Heart left ventricle (tissue), 16 donors: ENCODE measurements at regions of chr7 and their contacts with region 1.

Region 1: GRCh38 chr7:101743241-101743994 is 74.0 kb upstream of the CUX1 start:
- DNase-seq: peak; percentile 31 to 72 (median 48)
- ATAC-seq: peak; percentile 33 to 85 (median 64)
- H3K4me3 ChIP-seq: peak overlapping the region; percentile 29 to 68 (median 51)
- H3K27ac ChIP-seq: no peak overlapping the region
- H3K4me1 ChIP-seq: peaks cover 0 to 34% (median 3%) of the 10 kb centered on the region in 12 donors
- H3K27me3 ChIP-seq: peaks cover 0 to 19% (median 4%) of the 10 kb centered on the region in 9 donors
- CTCF ChIP-seq: peak; percentile 36 to 77 (median 64)
- POLR2A ChIP-seq: no peak

Region 2: GRCh38 chr7:101538596-101539459 is 204.6 kb before region 1 on chr7:
- intact Hi-C with region 1: no loop called
- DNase-seq: peak in 4 of 5 donors; percentile 36 to 80 (median 48)
- ATAC-seq: peak; percentile 34 to 68 (median 64)
- H3K4me3 ChIP-seq: no peak overlapping the region
- H3K27ac ChIP-seq: no peak overlapping the region
- H3K4me1 ChIP-seq: peaks cover 0 to 19% (median 0%) of the 10 kb centered on the region in 12 donors
- H3K27me3 ChIP-seq: peaks cover 0 to 5% (median 0%) of the 10 kb centered on the region in 9 donors
- CTCF ChIP-seq: peak; percentile 70 to 95 (median 86)
- POLR2A ChIP-seq: no peak

Region 3: DNA sequence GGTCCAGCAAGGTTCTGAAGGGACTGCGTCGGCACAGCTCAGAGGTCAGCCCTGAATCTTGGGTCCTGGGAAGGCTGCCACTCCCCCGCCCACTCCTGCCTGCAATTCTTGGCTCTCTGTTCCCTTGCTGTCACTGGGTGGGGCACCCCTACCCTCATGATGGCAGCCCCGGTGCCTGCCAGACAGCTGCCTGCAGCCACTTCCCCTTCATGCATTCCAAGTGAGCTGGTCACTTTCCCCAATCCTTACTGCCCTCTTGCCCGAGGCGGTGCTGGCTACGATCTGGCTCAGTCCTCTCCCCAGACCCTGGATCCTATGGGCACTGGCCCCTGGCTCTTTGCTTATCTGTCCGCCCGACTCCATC is 128.5 kb before region 1 on chr7:
- intact Hi-C with region 1: no loop called
- DNase-seq: peak in 1 of 5 donors; percentile 42
- ATAC-seq: peak in 2 of 4 donors; percentile 16 to 38
- H3K4me3 ChIP-seq: no peak overlapping the region
- H3K27ac ChIP-seq: no peak overlapping the region
- H3K4me1 ChIP-seq: peaks cover 0 to 6% (median 0%) of the 10 kb centered on the region in 12 donors
- H3K27me3 ChIP-seq: peaks cover 0 to 9% (median 0%) of the 10 kb centered on the region in 9 donors
- CTCF ChIP-seq: no peak
- POLR2A ChIP-seq: no peak

Region 4: DNA sequence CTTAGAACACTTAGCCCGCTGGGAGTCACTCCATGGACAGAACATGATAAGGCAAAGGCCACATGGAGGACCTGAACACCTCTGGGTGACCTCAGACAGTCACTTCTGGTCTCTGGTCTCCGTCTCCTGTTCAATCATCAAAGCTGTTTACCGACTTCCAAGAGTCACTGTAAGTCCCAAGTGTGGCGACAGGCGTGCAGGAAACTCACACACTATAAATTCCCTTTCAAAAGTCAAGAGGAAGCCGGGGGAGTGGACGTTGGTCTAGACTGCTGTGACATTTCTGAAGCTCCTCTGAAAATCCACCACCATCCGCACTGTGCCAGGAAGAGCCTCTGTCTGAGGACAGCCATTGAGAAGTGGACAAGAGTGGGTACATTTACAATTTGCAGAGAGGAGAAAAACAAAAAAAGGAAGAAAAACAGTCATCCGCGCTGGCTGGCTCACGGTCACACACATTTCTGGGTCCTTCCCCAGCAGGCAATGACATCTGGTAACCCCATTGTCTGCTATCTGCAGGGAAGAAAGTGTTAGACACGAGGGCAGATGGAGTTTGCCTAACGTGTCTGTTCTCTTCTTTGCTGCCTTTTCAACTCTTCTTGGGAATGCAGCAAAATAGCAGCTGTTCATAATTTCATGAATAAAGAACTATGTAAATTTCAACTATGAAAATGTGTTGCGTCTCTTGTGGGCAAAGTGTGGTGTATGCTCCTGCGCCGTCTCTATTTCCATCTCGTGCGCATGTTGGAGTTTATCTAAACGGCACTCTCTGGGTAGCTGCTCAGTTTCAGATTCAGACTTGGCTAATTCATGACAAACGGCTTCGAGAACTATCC is 41.1 kb after region 1 on chr7:
- intact Hi-C with region 1: no loop called
- DNase-seq: peak in 1 of 5 donors; percentile 27
- ATAC-seq: peak in 3 of 4 donors; percentile 52 to 71 (median 58)
- H3K4me3 ChIP-seq: peak overlapping the region in 6 of 12 donors; percentile 3 to 28 (median 18)
- H3K27ac ChIP-seq: peak overlapping the region in 2 of 12 donors; percentile 2 to 13
- H3K4me1 ChIP-seq: peaks cover 0 to 18% (median 14%) of the 10 kb centered on the region in 12 donors
- H3K27me3 ChIP-seq: no peaks in the 10 kb centered on the region
- CTCF ChIP-seq: no peak
- POLR2A ChIP-seq: no peak

Region 5: DNA sequence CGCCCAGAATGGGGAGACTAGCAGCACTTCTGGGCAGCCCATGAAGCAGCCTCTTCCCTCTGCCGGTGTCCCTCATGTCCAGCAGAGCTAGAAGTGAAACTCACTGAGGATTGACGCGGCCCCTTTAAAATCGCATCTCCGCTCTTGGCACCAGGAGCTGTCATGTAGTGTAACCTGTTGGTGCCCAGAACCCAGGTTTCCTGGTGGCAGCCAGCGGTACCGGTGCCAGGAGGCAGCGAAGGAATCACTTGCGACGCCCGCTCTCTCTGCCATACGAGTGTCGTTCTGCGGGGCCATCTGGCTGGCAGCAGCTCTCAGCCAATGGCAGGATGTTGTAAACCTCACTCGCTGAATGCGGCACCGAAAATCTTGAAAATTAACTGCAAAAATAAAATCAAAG is 156.7 kb after region 1 on chr7:
- intact Hi-C with region 1: no loop called
- DNase-seq: peak; percentile 69 to 89 (median 77)
- ATAC-seq: peak; percentile 69 to 86 (median 83)
- H3K4me3 ChIP-seq: peak overlapping the region in 8 of 12 donors; percentile 2 to 38 (median 30)
- H3K27ac ChIP-seq: peak overlapping the region in 10 of 12 donors; percentile 7 to 79 (median 60)
- H3K4me1 ChIP-seq: peaks cover 0 to 75% (median 40%) of the 10 kb centered on the region in 12 donors
- H3K27me3 ChIP-seq: no peaks in the 10 kb centered on the region
- CTCF ChIP-seq: peak in 3 of 12 donors; percentile 11 to 16 (median 14)
- POLR2A ChIP-seq: no peak

Region 6: GRCh38 chr7:102236592-102237287 is 493.3 kb after region 1 on chr7:
- intact Hi-C with region 1: loop called in 2 of 10 experiments (anchors 5 kb)
- DNase-seq: peak in 4 of 5 donors; percentile 45 to 64 (median 58)
- ATAC-seq: peak; percentile 73 to 90 (median 79)
- H3K4me3 ChIP-seq: no peak overlapping the region
- H3K27ac ChIP-seq: no peak overlapping the region
- H3K4me1 ChIP-seq: peaks cover 0 to 11% (median 3%) of the 10 kb centered on the region in 12 donors
- H3K27me3 ChIP-seq: no peaks in the 10 kb centered on the region
- CTCF ChIP-seq: peak; percentile 52 to 90 (median 82)
- POLR2A ChIP-seq: no peak

Region 7: GRCh38 chr7:102272075-102272917 is 528.9 kb after region 1 on chr7:
- intact Hi-C with region 1: loop called in 1 of 10 experiments (anchors 5 kb)
- DNase-seq: peak; percentile 69 to 88 (median 76)
- ATAC-seq: peak; percentile 86 to 90 (median 88)
- H3K4me3 ChIP-seq: no peak overlapping the region
- H3K27ac ChIP-seq: no peak overlapping the region
- H3K4me1 ChIP-seq: peaks cover 0 to 4% (median 0%) of the 10 kb centered on the region in 12 donors
- H3K27me3 ChIP-seq: no peaks in the 10 kb centered on the region
- CTCF ChIP-seq: peak; percentile 85 to 93 (median 88)
- POLR2A ChIP-seq: no peak